HepG2 (cell line): ENCODE measurements at regions of chr11 and their contacts with region 1.

Region 1: DNA sequence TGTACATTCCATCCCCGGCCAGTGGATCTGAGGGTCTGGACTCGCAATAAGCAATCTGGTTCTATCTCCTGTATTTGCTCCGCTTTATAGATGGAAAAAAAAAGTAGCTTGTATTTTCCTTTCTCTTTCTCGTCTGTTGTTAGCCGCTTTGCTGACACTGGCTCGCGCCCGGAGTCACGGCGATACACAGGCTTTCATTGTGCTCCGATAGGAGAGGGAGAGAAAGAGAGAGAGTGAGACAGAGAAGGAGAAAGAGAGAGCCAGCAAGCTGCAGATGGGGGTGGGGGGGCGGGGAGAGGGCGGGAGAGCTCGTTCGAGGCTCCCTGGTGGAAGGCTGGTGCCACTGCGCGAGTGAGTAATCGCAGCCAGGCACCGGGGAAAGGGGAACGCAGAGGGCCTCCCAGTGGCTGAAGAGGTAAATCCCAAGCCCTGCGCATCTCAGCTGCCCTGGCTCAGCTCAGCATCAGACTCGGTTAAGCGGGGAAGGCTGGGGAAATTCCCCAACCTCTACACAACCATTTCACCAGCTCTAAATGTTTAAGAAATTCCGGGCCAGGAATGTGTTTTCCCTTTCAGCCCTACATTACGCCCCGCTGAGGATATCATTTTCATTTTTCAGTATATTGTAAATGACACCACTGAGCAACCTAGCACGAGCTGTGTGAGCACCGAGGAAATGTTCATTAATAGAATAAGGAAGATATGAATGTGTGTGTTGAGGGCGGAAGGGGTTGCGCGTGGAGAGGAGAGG is at the start of gene MAML2:
- DNase-seq: peak; percentile 83
- ATAC-seq: peak; percentile 95
- H3K4me3 ChIP-seq: peak within 1 kb of the TSS; percentile 77 to 84 (median 80)
- H3K27ac ChIP-seq: peak within 1 kb of the TSS; percentile 80
- H3K4me1 ChIP-seq: peaks cover 42% of the 10 kb centered on the region
- H3K27me3 ChIP-seq: no peaks in the 10 kb centered on the region; a peak in 1 of 5 replicates
- CTCF ChIP-seq: peak; percentile 92
- EP300 ChIP-seq: no peak
- POLR2A ChIP-seq: no peak
- RAD21 ChIP-seq: peak; percentile 92
- total RNA-seq, gene MAML2: 2.3 and 2.9 TPM in 2 replicates

Region 2: DNA sequence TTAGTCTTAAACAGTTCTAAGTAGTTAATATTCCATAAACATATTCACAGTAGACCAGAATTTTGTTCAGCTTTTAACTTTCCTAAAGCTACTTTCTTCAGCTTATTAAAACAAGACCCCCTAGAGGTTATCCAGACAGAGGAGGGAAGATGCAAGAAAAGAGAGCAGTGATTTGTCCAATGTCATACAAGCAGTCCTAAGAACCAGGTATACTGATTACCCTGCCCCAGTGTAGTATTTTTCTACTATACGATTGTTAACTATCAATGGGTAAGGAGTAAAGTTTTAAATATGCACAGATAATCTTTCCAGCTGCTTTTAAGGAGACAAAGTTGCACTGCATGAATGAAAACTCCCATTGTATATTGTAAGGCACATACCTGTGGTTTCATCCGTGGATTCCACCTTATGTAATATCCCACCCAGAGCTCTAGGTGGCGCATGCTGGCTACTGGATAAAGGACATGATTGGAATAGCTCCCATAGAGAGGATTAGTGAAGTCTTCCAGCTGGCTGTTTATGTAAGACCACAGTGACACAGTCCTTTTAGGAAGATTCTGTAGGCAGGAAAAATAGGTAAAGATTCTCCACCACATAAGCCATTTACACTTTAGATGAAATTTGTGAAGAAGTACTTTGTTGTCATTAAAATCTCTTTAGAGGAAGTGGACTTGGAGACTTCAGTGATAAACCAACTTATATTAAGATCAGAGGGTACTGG is 507.2 kb before region 1 on chr11:
- CTCF ChIA-PET with region 1: interaction called, 4 read pairs
- POLR2A ChIA-PET with region 1: interaction called, 3 read pairs
- in situ Hi-C with region 1: no loop called
- intact Hi-C with region 1: loop called (anchors 1 kb)
- DNase-seq: peak; percentile 84
- ATAC-seq: peak; percentile 99
- H3K4me3 ChIP-seq: no peak overlapping the region
- H3K27ac ChIP-seq: no peak overlapping the region
- H3K4me1 ChIP-seq: no peaks in the 10 kb centered on the region
- H3K27me3 ChIP-seq: no peaks in the 10 kb centered on the region
- CTCF ChIP-seq: peak; percentile 88
- EP300 ChIP-seq: peak in 1 of 2 experiments; percentile 5; a peak in 1 of 4 replicates
- POLR2A ChIP-seq: no peak
- RAD21 ChIP-seq: peak; percentile 76

Region 3: DNA sequence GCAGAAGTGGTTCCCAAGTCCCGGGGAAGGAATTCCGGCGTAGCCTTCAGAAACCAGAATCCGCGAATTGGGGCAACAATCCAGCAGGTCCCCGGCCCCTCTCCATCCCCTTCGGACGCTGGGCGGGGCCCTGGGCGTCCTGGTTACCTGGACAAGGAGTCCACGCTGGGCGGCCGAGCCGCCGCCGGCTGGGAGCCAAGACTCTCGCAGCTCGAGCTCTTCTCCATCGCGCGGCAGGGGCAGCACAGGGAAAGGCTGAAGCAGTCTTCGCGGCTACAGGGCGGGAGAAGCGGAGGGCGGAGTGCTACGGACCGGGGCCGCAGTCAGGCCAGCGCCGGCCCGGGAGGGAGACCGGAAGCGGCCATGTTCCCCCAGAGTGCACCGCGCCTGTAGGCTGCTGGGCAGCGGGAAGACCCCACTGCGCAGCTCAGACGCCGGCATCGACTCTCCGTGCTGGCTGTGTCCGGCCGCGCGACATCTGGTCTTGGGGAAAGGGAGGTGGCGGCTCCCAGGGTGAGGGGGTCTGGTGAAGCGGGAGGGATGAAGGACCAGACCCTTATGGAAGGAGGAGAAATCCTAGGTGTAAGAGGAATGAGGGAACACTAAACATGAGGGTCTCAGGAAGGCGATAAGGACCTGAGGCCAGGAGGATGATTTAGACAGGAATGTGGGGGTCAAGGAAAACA is 419.3 kb before region 1 on chr11 and contains the start of gene MTMR2:
- CTCF ChIA-PET with region 1: no interaction called
- POLR2A ChIA-PET with region 1: interaction called, 11 read pairs
- in situ Hi-C with region 1: no loop called
- intact Hi-C with region 1: no loop called
- DNase-seq: peak; percentile 57
- ATAC-seq: peak; percentile 100
- H3K4me3 ChIP-seq: peak within 1 kb of the TSS; percentile 91 to 93 (median 93)
- H3K27ac ChIP-seq: peak within 1 kb of the TSS; percentile 85
- H3K4me1 ChIP-seq: peaks cover 35% of the 10 kb centered on the region
- H3K27me3 ChIP-seq: no peaks in the 10 kb centered on the region; a peak in 1 of 5 replicates
- CTCF ChIP-seq: peak; percentile 24
- EP300 ChIP-seq: no peak; a peak in 1 of 4 replicates
- POLR2A ChIP-seq: peak; percentile 79 to 95
- RAD21 ChIP-seq: peak; percentile 56; the same call in 1 of the 2 replicates
- total RNA-seq, gene MTMR2: 22.3 and 38.2 TPM in 2 replicates

Region 4: GRCh38 chr11:96054870-96055705 is 288.0 kb before region 1 on chr11:
- CTCF ChIA-PET with region 1: interaction called, 14 read pairs
- POLR2A ChIA-PET with region 1: interaction called, 7 read pairs
- in situ Hi-C with region 1: no loop called
- intact Hi-C with region 1: loop called (anchors 1 kb)
- DNase-seq: peak; percentile 44
- ATAC-seq: peak; percentile 47
- H3K4me3 ChIP-seq: no peak overlapping the region
- H3K27ac ChIP-seq: peak overlapping the region; percentile 7
- H3K4me1 ChIP-seq: peaks cover 57% of the 10 kb centered on the region
- H3K27me3 ChIP-seq: no peaks in the 10 kb centered on the region
- CTCF ChIP-seq: peak; percentile 65
- EP300 ChIP-seq: no peak
- POLR2A ChIP-seq: no peak
- RAD21 ChIP-seq: peak; percentile 50; the same call in 1 of the 2 replicates

Region 5: GRCh38 chr11:96098514-96099241 is 244.5 kb before region 1 on chr11:
- CTCF ChIA-PET with region 1: no interaction called
- POLR2A ChIA-PET with region 1: no interaction called
- in situ Hi-C with region 1: no loop called
- intact Hi-C with region 1: loop called (anchors 2 kb)
- DNase-seq: peak; percentile 95
- ATAC-seq: peak; percentile 86
- H3K4me3 ChIP-seq: peak overlapping the region in 2 of 3 experiments; percentile 12 to 52; a peak in 3 of 6 replicates
- H3K27ac ChIP-seq: peak overlapping the region; percentile 92
- H3K4me1 ChIP-seq: peaks cover 82% of the 10 kb centered on the region
- H3K27me3 ChIP-seq: no peaks in the 10 kb centered on the region
- CTCF ChIP-seq: no peak
- EP300 ChIP-seq: peak; percentile 92
- POLR2A ChIP-seq: no peak
- RAD21 ChIP-seq: peak; percentile 10; the same call in 1 of the 2 replicates

Region 6: GRCh38 chr11:96242971-96243647 is 100.0 kb before region 1 on chr11:
- CTCF ChIA-PET with region 1: no interaction called
- POLR2A ChIA-PET with region 1: interaction called, 10 read pairs
- in situ Hi-C with region 1: no loop called
- intact Hi-C with region 1: loop called (anchors 5 kb)
- DNase-seq: peak; percentile 37
- ATAC-seq: peak; percentile 67
- H3K4me3 ChIP-seq: no peak overlapping the region; a peak in 1 of 6 replicates
- H3K27ac ChIP-seq: peak overlapping the region; percentile 71
- H3K4me1 ChIP-seq: peaks cover 77% of the 10 kb centered on the region
- H3K27me3 ChIP-seq: no peaks in the 10 kb centered on the region
- CTCF ChIP-seq: no peak
- EP300 ChIP-seq: no peak
- POLR2A ChIP-seq: no peak
- RAD21 ChIP-seq: no peak

Region 7: GRCh38 chr11:96389720-96390487 is 46.8 kb after region 1 on chr11 and contains the starts of genes CCDC82 and JRKL:
- CTCF ChIA-PET with region 1: no interaction called
- POLR2A ChIA-PET with region 1: interaction called, 18 read pairs
- in situ Hi-C with region 1: no loop called
- intact Hi-C with region 1: no loop called
- DNase-seq: peak; percentile 91
- ATAC-seq: peak; percentile 97
- H3K4me3 ChIP-seq: peak within 1 kb of the TSS; percentile 79 to 81 (median 80)
- H3K27ac ChIP-seq: peak within 1 kb of the TSS; percentile 78
- H3K4me1 ChIP-seq: peaks cover 51% of the 10 kb centered on the region
- H3K27me3 ChIP-seq: no peaks in the 10 kb centered on the region
- CTCF ChIP-seq: 0 out of 2 replicates have a peak, but pooled peaks have one; percentile 9
- EP300 ChIP-seq: 0 out of 4 replicates have a peak, but pooled peaks of 1 of the 2 experiments have one; percentile 36
- POLR2A ChIP-seq: peak; percentile 58 to 83
- RAD21 ChIP-seq: 0 out of 2 replicates have a peak, but pooled peaks have one; percentile 33
- total RNA-seq, gene CCDC82: 19.7 and 23.5 TPM in 2 replicates
- total RNA-seq, gene JRKL: 4.5 and 8.6 TPM in 2 replicates